AG04450 (cell line): ENCODE measurements at regions of chr7 and their contacts with region 1.

Region 1: DNA sequence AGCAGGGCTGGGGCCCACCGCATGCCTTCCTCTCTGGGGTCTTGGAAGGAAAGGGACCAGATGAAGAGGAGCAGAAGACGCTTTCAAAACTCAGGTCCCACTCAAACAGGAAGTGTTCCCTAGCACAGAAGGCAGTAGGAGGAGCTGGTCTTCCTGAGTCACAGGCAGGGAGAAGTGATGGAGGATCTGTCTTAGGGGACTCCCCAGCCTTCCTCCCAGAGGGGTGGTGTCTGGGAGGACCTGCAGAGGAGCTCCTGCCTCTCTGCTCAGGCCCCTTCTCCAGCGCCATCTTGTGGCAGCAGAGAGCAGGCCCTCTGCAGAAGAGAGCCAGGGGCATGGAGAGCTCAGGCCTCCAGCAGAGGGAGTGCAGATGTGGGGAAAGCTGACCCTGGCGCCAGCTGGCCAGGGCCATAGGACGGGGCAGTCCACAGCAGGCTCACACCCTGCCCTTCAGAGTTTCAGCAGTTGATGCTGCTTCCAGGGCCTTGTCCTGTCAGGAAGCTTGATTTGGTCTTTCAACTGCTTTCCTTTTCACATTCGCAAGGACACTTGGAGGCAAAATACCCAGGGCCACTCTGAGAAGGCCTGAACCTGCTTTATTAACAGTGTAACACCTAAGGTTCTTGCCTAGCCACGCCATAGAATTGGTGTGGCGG is 62.2 kb upstream of the TARP start:
- DNase-seq: peak; percentile 77
- H3K4me3 ChIP-seq: peak overlapping the region; percentile 22
- H3K27ac ChIP-seq: no peak overlapping the region
- H3K27me3 ChIP-seq: no peaks in the 10 kb centered on the region
- CTCF ChIP-seq: peak; percentile 99

Region 2: DNA sequence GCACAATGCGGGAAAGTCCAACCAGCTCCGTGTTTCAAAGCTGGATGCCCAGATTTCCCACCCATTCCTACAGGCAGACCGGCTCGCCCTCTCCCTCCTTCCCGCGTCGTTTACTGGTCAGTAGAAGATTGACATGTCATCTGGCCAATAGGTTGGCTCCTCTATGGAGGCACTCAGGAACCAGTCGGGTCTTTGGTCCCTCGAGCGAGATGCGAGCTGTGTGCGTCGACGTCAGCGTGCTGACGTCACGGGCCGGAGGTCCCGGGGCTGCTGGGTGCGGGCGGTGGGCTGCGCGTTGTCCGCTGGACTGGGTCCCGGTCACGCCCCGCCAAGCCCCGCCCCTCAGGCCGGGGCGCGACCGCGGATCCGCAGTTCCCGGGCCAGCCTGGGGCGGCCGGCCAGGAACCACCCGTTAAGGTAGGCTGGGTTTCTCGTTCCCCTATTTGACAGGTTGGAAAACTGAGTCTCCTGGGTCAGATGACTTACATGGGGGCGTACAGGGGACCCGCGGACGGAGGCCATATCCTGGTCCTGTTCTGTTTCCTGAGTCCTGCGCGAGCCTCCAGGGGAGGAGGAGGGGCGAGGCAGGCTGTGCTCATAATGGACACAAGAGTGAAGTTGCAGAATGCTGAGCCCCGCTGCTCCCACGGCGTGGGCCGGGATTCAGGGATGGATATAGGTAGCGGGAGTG is 157.5 kb before region 1 on chr7 and contains the start of gene STARD3NL:
- CTCF ChIA-PET with region 1: interaction called, 14 read pairs
- POLR2A ChIA-PET with region 1: no interaction called
- DNase-seq: peak; percentile 100
- H3K4me3 ChIP-seq: peak within 1 kb of the TSS; percentile 84
- H3K27ac ChIP-seq: peak within 1 kb of the TSS; percentile 84
- H3K27me3 ChIP-seq: no peaks in the 10 kb centered on the region
- CTCF ChIP-seq: no peak
- polyA plus RNA-seq, gene STARD3NL: 63.8 and 93.4 TPM in 2 replicates

Region 3: GRCh38 chr7:38215735-38216670 is 119.6 kb before region 1 on chr7:
- CTCF ChIA-PET with region 1: interaction called, 104 read pairs
- POLR2A ChIA-PET with region 1: interaction called, 4 read pairs
- DNase-seq: peak; percentile 88
- H3K4me3 ChIP-seq: no peak overlapping the region
- H3K27ac ChIP-seq: no peak overlapping the region
- H3K27me3 ChIP-seq: no peaks in the 10 kb centered on the region
- CTCF ChIP-seq: peak; percentile 99

Region 4: DNA sequence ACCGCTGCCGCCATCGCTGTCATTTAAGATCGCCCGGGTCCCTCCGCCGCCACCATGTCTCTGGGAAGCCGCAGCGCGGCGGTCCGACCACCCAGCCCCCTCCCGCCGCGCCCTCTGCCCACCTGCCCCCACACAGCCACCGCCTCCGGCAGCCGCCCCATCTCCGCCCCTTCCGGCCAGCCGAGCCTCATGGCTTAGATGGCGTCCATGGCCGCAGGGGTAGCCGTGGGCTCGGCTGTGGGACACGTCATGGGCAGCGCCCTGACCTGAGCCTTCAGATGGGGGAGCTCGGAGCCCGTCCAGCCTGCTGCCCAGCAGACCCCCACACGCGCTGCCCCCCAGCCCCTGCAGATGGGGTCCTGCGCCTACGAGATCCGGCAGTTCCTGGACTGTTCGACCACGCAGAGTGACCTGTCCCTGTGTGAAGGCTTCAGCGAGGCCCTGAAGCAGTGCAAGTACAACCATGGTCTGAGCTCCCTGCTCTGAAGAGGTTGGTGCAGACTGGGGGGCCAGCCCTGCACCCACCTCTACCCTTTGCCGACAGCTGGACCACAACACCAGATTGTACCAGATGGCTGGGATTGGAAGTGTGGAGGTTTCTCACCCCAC is 24.2 kb before region 1 on chr7:
- CTCF ChIA-PET with region 1: interaction called, 114 read pairs
- POLR2A ChIA-PET with region 1: no interaction called
- DNase-seq: no peak
- H3K4me3 ChIP-seq: peak overlapping the region; percentile 55
- H3K27ac ChIP-seq: no peak overlapping the region
- H3K27me3 ChIP-seq: no peaks in the 10 kb centered on the region
- CTCF ChIP-seq: no peak

Region 5: DNA sequence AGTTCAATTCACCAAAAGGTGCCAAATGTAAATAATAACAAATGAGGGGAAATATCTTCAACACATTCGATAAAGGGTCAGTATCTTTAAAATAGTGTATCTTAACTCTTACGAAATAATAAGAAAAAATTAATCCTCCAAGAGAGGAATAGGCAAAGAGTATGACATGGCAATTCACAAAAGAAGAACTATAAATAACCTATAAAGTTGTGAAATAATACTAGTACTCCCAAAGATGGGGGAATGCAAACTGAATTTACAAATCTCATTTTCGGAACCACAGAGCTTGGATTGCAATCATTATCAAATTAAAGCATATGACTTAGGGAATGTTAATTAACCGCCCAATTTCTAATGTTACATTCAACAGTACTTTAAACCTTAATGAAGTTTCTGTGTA is 16.0 kb after region 1 on chr7:
- CTCF ChIA-PET with region 1: interaction called, 18 read pairs
- POLR2A ChIA-PET with region 1: no interaction called
- DNase-seq: no peak
- H3K4me3 ChIP-seq: no peak overlapping the region
- H3K27ac ChIP-seq: no peak overlapping the region
- H3K27me3 ChIP-seq: no peaks in the 10 kb centered on the region
- CTCF ChIP-seq: no peak

Region 6: DNA sequence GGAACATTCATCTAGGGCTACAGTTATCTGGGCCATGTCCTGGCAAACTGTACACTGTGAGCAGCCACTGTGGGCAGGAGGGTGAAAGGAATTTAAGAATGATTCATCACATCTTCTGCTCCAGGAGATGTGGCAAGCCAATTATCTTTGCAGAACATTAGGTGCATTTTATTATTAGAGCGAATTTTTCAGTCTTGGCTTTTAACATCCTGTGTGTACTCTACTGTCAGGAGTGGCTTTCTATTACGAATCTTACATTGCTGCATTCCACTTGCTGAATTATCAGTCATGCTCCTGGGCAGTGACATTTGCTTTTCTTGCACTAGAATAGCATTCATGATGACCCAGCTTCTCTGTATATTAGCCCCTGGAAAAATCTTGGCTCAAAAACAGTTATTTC is 47.1 kb after region 1 on chr7:
- CTCF ChIA-PET with region 1: interaction called, 10 read pairs
- POLR2A ChIA-PET with region 1: no interaction called
- DNase-seq: no peak
- H3K4me3 ChIP-seq: no peak overlapping the region
- H3K27ac ChIP-seq: no peak overlapping the region
- H3K27me3 ChIP-seq: no peaks in the 10 kb centered on the region
- CTCF ChIP-seq: no peak